BJ (cell line): ENCODE measurements at regions of chr4 and their contacts with region 1.

Region 1: GRCh38 chr4:48779998-48780742 is at the start of gene FRYL:
- DNase-seq: peak; percentile 99
- H3K4me3 ChIP-seq: peak within 1 kb of the TSS; percentile 91
- H3K27me3 ChIP-seq: no peaks in the 10 kb centered on the region
- CTCF ChIP-seq: no peak
- polyA plus RNA-seq, gene FRYL: 12.6 and 19.7 TPM in 2 replicates

Region 2: DNA sequence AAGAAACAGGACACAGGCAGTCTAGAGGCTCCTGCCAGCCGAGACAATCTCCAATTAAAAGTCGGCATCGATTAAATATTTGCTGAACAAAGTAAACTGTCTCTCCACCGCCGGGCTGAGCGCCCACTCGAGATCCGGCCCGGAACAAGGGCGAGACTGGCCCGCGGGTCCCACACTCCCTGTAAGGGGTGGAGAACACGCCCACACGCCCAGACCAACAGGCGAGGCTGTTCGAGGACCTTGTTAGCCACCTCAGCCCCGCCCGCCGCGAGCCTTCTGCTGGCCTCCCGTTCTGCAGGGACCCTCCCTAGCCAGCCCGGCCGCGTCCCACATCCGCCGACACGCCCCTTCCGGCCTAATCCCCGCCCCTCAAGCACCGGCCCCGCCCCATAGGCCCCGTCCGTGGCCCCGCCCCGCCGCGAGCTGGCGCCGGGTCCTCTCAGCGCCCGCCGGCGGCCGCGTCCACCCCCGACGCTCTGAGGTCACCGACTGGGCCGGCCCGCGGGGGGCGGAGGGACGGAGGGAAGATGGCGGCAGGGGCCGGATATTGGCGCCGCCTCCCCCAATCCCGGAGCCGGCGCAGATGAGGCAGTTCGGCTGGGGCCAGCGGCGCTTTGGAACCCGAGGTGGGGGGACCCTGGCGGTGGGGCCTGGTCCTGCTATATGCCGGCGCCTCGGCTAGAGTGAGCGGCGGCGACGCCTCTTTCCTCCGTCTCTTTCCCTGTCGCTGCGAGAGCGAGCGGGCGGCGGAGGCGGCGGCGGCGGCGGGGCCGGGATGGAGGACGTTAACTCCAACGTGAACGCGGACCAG is 439.0 kb before region 1 on chr4 and contains the start of gene SLAIN2:
- CTCF ChIA-PET with region 1: no interaction called
- POLR2A ChIA-PET with region 1: interaction called, 10 read pairs
- DNase-seq: peak; percentile 82
- H3K4me3 ChIP-seq: peak within 1 kb of the TSS; percentile 66
- H3K27me3 ChIP-seq: no peaks in the 10 kb centered on the region
- CTCF ChIP-seq: peak; percentile 42
- polyA plus RNA-seq, gene SLAIN2: 25.5 and 40.5 TPM in 2 replicates